ENCODE measurements at regions of chr11 and their contacts with region 1.

Region 1: GRCh38 chr11:122505304-122506006 is 150.1 kb upstream of the UBASH3B start:
- DNase-seq: no peak
- ATAC-seq: no peak
- H3K4me3 Mint-ChIP-seq: no peak overlapping the region
- H3K27ac Mint-ChIP-seq: no peak overlapping the region
- H3K4me1 Mint-ChIP-seq: no peaks in the 10 kb centered on the region
- H3K27me3 Mint-ChIP-seq: peaks cover 22% of the 10 kb centered on the region
- CTCF ChIP-seq: no peak

Region 2: GRCh38 chr11:121249039-121249663 is 1256.3 kb before region 1 on chr11:
- CTCF ChIA-PET with region 1: no interaction called
- POLR2A ChIA-PET with region 1: no interaction called
- intact Hi-C with region 1: loop called (anchors 10 kb)
- DNase-seq: no peak
- ATAC-seq: peak; percentile 73
- H3K4me3 Mint-ChIP-seq: no peak overlapping the region
- H3K27ac Mint-ChIP-seq: no peak overlapping the region
- H3K4me1 Mint-ChIP-seq: peaks cover 3% of the 10 kb centered on the region
- H3K27me3 Mint-ChIP-seq: peaks cover 4% of the 10 kb centered on the region
- CTCF ChIP-seq: peak; percentile 72

Region 3: GRCh38 chr11:122453586-122453985 is 51.9 kb before region 1 on chr11:
- CTCF ChIA-PET with region 1: no interaction called
- POLR2A ChIA-PET with region 1: no interaction called
- intact Hi-C with region 1: no loop called
- DNase-seq: no peak
- ATAC-seq: no peak
- H3K4me3 Mint-ChIP-seq: no peak overlapping the region
- H3K27ac Mint-ChIP-seq: no peak overlapping the region
- H3K4me1 Mint-ChIP-seq: no peaks in the 10 kb centered on the region
- H3K27me3 Mint-ChIP-seq: peaks cover 5% of the 10 kb centered on the region
- CTCF ChIP-seq: no peak

Measured in activated B cell treated with CpG ODN at 0.5 μM for 24 hours (primary cell).